ENCODE measurements at regions of chr12 and their contacts with region 1.

Region 1: DNA sequence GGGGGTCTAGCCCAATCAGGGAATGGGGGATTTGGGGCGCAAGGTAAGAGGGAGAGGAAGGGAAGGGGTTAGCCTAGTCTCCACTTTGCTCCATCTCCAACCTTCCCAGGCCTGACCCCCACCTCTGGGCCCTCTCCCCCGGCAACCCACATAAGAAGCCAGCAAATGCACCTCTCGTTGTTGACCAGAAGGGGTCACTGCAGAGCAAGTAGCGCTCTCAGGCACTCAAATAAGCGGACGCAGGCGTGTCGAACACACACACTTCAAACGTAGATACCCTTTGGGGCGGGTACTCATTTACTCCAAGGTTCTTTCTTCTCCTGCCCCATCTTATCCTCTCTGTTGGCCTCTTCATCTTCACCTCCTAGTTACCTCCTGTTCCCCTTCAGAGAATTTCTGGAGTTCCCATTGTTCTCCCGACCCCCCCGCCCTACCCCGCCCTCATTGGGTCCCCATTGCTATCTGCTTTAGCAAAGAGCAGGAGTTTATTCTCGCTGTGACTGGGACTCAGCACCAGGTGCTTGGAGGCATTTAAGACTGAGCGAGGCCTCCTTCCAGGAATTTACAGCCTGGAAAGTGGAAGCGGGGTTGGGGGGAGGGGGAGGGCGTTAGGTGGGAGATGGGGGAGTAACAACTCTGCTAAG is 1.5 kb upstream of the SRRM4 start:
- DNase-seq: peak; percentile 39 to 86
- H3K4me3 ChIP-seq: peak overlapping the region; percentile 70 to 97 (median 74)
- H3K27ac ChIP-seq: no peak overlapping the region
- H3K4me1 ChIP-seq: peaks cover 0 to 3% (median under 1%) of the 10 kb centered on the region in 4 experiments; a peak in 2 of 7 replicates
- H3K27me3 ChIP-seq: peaks cover 0 to 23% (median 14%) of the 10 kb centered on the region in 4 experiments; a peak in 6 of 7 replicates
- CTCF ChIP-seq: peak; percentile 84 to 94 (median 84)
- EP300 ChIP-seq: no peak
- POLR2A ChIP-seq: no peak
- RAD21 ChIP-seq: peak; percentile 81 to 88

Region 2: DNA sequence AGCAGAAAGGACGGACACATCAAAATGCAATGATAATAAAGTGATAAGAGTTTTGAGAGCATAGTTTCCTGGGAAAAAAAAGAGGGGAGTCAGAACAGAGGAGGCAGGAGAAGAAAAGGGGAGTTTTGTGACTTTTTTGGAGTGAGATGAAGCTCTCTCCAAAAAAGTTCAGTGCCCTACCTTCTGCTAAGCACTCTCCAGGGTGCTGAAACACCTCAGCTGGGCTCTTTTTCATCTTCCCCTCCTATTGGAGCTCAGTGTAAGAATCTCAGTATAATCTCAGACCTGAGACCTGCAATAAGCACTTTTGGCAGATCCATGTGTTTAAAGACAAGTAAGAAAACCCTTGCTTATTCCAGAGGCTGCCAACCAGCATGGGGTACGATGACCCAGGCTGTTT is 57.5 kb before region 1 on chr12:
- CTCF ChIA-PET with region 1: no interaction called
- POLR2A ChIA-PET with region 1: no interaction called
- DNase-seq: peak in 1 of 2 experiments; percentile 53
- H3K4me3 ChIP-seq: no peak overlapping the region
- H3K27ac ChIP-seq: no peak overlapping the region
- H3K4me1 ChIP-seq: no peaks in the 10 kb centered on the region
- H3K27me3 ChIP-seq: peaks cover 0 to 2% (median 0%) of the 10 kb centered on the region in 4 experiments; a peak in 1 of 7 replicates
- CTCF ChIP-seq: no peak
- EP300 ChIP-seq: no peak
- POLR2A ChIP-seq: no peak
- RAD21 ChIP-seq: peak in 1 of 2 experiments; percentile 11; a peak in 1 of 4 replicates

Region 3: GRCh38 chr12:118958520-118958919 is 21.4 kb before region 1 on chr12:
- CTCF ChIA-PET with region 1: interaction called, 12 read pairs
- POLR2A ChIA-PET with region 1: interaction called, 3 read pairs
- DNase-seq: no peak
- H3K4me3 ChIP-seq: no peak overlapping the region
- H3K27ac ChIP-seq: no peak overlapping the region
- H3K4me1 ChIP-seq: no peaks in the 10 kb centered on the region; a peak in 1 of 7 replicates
- H3K27me3 ChIP-seq: no peaks in the 10 kb centered on the region
- CTCF ChIP-seq: no peak
- EP300 ChIP-seq: no peak
- POLR2A ChIP-seq: no peak
- RAD21 ChIP-seq: no peak

Measured in H1 (cell line).